GM10248 (cell line): ENCODE measurements at regions of chr3 and their contacts with region 1.

Region 1: DNA sequence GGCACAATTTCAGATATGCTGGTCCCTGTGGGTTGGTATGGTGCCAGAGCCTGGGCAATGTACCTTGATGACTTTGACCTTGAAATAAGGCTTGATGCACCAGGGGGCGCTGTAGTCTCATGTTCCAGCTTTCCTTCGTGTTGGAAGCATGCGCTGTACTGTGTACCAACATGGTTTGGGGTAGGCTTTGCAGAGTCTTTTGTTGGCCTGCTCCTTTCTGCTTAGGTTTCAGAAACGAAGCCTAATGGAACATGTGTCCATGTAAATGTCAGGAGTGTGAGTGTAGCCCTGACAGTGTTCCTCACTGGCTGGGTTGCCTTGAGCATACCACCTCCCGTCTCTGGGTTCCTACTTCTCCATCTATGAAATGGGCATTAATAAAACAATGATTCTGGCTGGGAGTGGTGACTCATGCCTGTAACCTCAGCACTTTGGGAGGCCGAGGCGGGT is 3.6 kb upstream of the CCR4 start:
- DNase-seq: peak; percentile 64
- CTCF ChIP-seq: peak; percentile 73

Region 2: GRCh38 chr3:32960404-32961170 is 12.8 kb after region 1 on chr3:
- CTCF ChIA-PET with region 1: interaction called, 13 read pairs
- POLR2A ChIA-PET with region 1: no interaction called
- DNase-seq: no peak
- CTCF ChIP-seq: no peak

Region 3: GRCh38 chr3:32992322-32992692 is 44.5 kb after region 1 on chr3:
- CTCF ChIA-PET with region 1: interaction called, 13 read pairs
- POLR2A ChIA-PET with region 1: no interaction called
- DNase-seq: no peak
- CTCF ChIP-seq: no peak

Region 4: DNA sequence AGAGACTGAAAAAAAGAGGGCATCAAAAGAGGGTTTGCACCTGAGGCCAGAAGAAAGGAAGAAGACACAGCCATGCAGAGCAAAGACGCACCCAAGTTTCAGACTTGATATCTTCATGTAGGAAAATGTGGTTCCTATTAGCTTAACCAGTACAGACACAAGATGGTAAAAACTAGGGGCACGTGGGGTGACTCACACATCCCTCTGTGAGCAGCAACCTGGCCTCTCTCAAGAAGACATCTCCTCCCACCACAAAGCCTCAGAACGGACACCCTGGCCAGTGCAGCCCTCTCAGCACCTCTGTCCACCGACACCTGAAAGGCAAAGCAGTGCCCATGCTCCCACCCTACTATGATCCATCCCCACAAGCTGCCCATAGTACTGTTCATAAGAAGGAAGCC is 115.8 kb after region 1 on chr3:
- CTCF ChIA-PET with region 1: interaction called, 40 read pairs
- POLR2A ChIA-PET with region 1: no interaction called
- DNase-seq: peak; percentile 26
- CTCF ChIP-seq: no peak

Region 5: GRCh38 chr3:33074217-33075067 is 126.6 kb after region 1 on chr3:
- CTCF ChIA-PET with region 1: interaction called, 137 read pairs
- POLR2A ChIA-PET with region 1: no interaction called
- DNase-seq: peak; percentile 78
- CTCF ChIP-seq: peak; percentile 88

Region 6: DNA sequence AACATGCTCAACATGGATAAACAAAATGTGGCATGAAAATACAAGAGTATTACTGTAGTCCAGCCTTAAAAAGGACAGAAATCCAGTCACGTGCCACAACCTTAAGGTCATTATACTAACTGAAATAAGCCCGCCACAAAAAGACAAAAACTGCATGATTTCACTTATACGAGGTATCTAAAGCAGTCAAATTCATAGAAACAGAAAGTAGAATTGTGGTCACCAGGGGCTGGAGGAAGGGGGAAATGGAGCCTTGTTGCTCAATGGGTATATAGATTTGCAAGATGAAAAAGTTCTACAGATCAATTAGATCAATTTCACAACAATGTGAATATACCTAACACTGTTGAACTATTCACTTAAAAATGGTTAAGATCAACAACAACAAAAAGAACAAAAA is 141.7 kb after region 1 on chr3:
- CTCF ChIA-PET with region 1: interaction called, 10 read pairs
- POLR2A ChIA-PET with region 1: no interaction called
- DNase-seq: no peak
- CTCF ChIP-seq: no peak

Region 7: DNA sequence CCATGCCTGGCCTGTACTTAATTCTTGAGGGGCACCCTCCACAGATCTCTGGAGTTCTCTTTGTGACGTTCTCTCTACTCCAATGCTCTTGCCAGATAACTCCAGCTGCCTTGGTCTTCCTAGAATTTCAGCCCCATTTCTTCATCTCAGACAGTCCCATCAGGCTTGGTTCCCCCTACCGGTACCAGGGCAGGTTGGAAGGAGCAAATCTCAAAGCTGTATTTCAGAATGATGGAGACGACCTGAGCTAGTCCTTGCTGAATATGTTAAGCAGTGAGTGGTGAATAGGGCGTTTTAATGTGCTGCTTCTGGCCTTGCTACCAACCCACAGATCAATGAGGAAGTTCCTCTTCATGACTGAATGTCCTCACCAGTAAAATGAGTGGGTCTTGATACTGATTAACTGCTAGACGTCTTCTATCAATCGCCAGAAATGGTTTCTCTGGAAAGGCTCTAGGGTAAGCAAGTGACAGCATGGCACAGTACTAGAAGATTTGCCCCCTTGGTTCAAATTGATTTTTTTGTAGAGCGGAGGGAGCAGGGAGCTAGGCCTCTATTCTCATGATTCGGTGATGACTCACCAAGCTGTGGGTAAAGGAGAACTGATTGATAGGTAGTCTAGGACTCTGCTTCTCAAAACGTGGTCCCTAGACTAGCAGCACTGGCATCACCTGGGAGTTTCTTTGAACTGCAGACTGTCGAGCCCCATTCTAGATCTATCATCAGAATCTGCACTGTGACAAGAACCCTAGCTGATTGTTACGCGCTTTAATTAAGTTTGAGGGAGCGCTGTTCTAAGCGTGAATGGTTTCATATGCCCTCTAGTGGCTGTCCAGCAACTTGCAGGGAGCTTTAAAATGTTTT is 424.6 kb after region 1 on chr3:
- CTCF ChIA-PET with region 1: interaction called, 40 read pairs
- POLR2A ChIA-PET with region 1: no interaction called
- DNase-seq: peak; percentile 56
- CTCF ChIP-seq: peak; percentile 85